HepG2 (cell line): ENCODE measurements at regions of chr15 and their contacts with region 1.

Region 1: DNA sequence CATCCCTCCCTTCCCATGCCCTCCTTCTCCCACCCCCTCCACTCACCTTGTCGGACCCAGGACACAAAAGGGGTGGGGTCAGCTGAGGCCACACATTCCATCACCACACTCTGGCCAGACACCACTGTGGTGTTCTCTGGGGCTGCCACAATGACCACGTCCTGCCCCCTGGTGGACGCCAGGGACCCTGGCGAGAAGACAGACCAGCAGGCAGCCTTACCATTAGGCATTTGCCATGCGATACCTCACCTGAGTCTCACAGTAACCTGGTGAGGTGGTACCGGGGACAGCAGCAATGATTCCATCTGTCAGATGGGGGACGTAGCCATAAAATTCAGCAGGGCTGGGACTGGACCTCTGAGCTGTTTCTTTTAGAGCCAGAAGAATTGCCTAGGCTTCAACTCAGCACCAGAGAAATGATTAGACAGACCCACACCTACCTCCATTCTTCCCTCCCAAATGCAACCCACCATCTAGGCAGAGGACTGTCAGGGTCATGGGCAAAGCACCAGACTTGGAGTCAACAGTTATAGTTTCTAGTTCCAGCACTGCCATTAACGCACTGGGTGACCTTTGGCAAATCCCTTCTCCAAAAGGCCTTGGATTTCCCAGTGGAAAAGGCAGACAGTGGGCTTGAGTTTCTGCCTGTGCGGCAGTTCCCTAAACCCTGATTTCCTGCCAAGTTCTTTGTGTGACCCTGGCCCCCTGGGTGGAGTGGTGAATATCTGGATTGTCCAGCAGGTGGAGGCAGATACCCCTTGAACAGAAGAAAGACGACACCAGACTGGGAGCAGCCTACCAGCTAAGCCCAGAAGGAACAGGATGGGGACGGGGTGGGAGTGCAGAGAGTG is 21.8 kb downstream of the IGDCC4 start:
- DNase-seq: peak; percentile 74
- ATAC-seq: peak; percentile 95
- H3K4me3 ChIP-seq: peak overlapping the region in 1 of 3 experiments; percentile 52; a peak in 2 of 6 replicates
- H3K27ac ChIP-seq: no peak overlapping the region
- H3K4me1 ChIP-seq: peaks cover 25% of the 10 kb centered on the region
- H3K27me3 ChIP-seq: peaks cover 0 to 28% of the 10 kb centered on the region in 2 experiments; a peak in 2 of 5 replicates
- CTCF ChIP-seq: peak; percentile 92
- EP300 ChIP-seq: no peak
- POLR2A ChIP-seq: no peak
- RAD21 ChIP-seq: peak; percentile 70

Region 2: DNA sequence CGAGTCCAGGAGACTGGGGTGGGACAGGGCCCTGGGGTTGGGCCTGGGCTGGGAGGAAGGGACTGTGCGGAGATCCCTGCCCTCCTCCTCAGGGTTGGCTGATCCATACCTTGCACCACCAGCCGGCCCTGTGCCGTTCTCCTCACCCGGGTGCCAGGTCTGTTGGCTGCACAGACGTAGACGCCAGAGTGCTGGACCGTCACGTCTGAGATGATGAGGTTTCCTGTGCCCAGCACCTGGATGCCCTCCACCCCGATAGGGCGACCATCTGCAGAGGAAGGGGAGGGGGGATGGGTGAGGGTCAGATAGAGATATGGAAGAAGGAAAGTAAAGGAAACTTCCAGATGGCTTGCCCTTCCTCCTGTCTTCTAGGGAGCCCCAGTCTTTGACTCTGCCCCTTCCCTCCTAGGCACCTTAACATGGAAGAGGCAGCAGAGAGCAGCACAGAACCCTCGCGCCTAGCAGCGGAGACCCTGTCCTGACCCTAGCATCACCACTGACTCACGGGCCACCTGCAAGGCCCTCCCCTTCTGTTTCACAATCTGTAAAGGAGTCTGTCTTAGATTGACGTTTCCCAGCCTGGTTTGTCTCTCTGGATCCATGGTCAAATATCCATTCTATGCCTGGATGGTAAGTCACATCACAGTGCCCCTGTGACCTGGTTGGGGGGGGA is 67.7 kb before region 1 on chr15:
- CTCF ChIA-PET with region 1: no interaction called
- POLR2A ChIA-PET with region 1: no interaction called
- in situ Hi-C with region 1: no loop called
- intact Hi-C with region 1: no loop called
- DNase-seq: no peak
- ATAC-seq: no peak
- H3K4me3 ChIP-seq: no peak overlapping the region
- H3K27ac ChIP-seq: no peak overlapping the region
- H3K4me1 ChIP-seq: no peaks in the 10 kb centered on the region
- H3K27me3 ChIP-seq: no peaks in the 10 kb centered on the region
- CTCF ChIP-seq: no peak
- EP300 ChIP-seq: no peak
- POLR2A ChIP-seq: no peak
- RAD21 ChIP-seq: no peak

Region 3: GRCh38 chr15:65434201-65434600 is 33.2 kb after region 1 on chr15:
- CTCF ChIA-PET with region 1: interaction called, 4 read pairs
- POLR2A ChIA-PET with region 1: no interaction called
- in situ Hi-C with region 1: no loop called
- intact Hi-C with region 1: loop called (anchors 2 kb)
- DNase-seq: no peak
- ATAC-seq: no peak
- H3K4me3 ChIP-seq: no peak overlapping the region
- H3K27ac ChIP-seq: no peak overlapping the region
- H3K4me1 ChIP-seq: no peaks in the 10 kb centered on the region
- H3K27me3 ChIP-seq: peaks cover 0 to 14% of the 10 kb centered on the region in 2 experiments; a peak in 2 of 5 replicates
- CTCF ChIP-seq: no peak
- EP300 ChIP-seq: no peak
- POLR2A ChIP-seq: no peak
- RAD21 ChIP-seq: no peak